ENCODE measurements at regions of chr12 and their contacts with region 1.

Region 1: DNA sequence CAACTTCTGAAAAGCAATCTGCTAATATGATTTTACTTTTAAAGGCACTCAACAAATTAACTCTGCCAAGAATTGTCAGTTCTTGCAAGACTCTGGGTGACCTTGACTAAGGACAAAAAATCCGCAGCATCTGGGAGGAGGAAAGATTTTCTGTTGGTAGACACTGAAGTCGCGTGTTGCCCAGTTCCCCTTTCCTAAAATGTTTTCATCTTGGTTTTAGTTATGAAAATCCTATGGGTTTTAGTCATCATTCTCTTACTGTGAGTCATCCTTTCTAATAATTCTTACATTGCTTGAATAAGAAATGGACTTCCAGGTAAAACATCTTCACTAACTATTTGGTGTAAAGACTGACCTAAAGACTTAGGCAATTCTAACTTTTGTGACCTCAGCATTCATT is 9.1 kb downstream of the GSG1 start:
- DNase-seq: no peak
- H3K4me3 ChIP-seq: no peak overlapping the region
- H3K27ac ChIP-seq: no peak overlapping the region
- H3K4me1 ChIP-seq: peaks cover 20% of the 10 kb centered on the region
- H3K27me3 ChIP-seq: no peaks in the 10 kb centered on the region
- CTCF ChIP-seq: no peak
- POLR2A ChIP-seq: no peak

Region 2: DNA sequence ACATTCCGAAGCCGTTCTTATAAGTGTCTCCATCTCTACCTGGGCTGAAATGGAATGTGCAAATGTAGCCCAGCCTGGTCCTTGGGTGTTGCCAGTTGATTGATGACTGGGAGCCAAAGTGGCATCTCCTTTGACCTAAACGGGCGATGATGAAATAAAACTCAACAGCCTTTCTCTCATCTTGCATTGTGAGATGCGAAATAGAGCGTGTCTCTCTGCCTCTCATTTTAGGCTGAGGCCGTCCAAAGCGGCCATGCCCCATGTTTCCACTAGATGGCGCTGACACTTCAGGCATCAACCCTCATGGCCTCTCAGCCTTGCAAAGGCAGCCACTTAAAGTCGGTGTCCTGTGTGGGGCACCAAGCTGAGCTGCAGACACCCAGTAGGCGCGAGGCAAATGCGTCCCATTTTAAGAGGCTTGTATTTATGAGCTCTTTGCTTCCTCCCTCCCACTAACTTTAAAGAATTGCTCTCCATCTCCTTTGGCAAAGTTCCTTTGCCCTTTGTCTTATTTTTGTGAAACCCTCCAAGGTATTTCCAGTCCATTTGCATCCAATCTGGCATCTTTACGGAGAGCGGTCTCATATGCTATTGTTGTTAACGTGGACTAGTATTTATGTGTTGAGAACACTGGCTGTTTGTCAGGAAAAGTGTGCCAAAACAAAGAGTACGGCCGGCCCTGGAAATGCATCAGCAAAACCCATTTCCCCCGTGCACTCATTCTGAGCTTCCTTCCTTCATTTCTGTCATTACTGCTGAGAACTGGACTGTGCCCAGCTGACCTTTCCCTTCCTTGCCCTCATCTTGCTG is 178.0 kb before region 1 on chr12:
- intact Hi-C with region 1: loop called (anchors 10 kb)
- DNase-seq: no peak
- H3K4me3 ChIP-seq: no peak overlapping the region
- H3K27ac ChIP-seq: peak overlapping the region; percentile 49
- H3K4me1 ChIP-seq: peaks cover 20% of the 10 kb centered on the region
- H3K27me3 ChIP-seq: no peaks in the 10 kb centered on the region
- CTCF ChIP-seq: peak; percentile 93 to 99 (median 96)
- POLR2A ChIP-seq: no peak

Measured in vagina (tissue), 2 donors.